ENCODE measurements at regions of chr6 and their contacts with region 1.

Region 1: GRCh38 chr6:121055572-121056163 is 278.6 kb downstream of the TBC1D32 start:
- DNase-seq: peak in 3 of 14 experiments; percentile 34 to 54 (median 47)
- ATAC-seq: peak; percentile 39
- H3K4me3 ChIP-seq: no peak overlapping the region
- H3K4me3 Mint-ChIP-seq: no peak overlapping the region
- H3K27ac ChIP-seq: no peak overlapping the region
- H3K27ac Mint-ChIP-seq: no peak overlapping the region
- H3K4me1 ChIP-seq: no peaks in the 10 kb centered on the region
- H3K4me1 Mint-ChIP-seq: no peaks in the 10 kb centered on the region
- H3K27me3 ChIP-seq: no peaks in the 10 kb centered on the region
- H3K27me3 Mint-ChIP-seq: no peaks in the 10 kb centered on the region
- CTCF ChIP-seq: peak; percentile 65

Region 2: GRCh38 chr6:120918137-120918536 is 137.5 kb before region 1 on chr6:
- CTCF ChIA-PET with region 1: no interaction called
- POLR2A ChIA-PET with region 1: no interaction called
- intact Hi-C with region 1: no loop called
- DNase-seq: no peak
- ATAC-seq: no peak
- H3K4me3 ChIP-seq: no peak overlapping the region
- H3K4me3 Mint-ChIP-seq: no peak overlapping the region
- H3K27ac ChIP-seq: no peak overlapping the region
- H3K27ac Mint-ChIP-seq: no peak overlapping the region
- H3K4me1 ChIP-seq: no peaks in the 10 kb centered on the region
- H3K4me1 Mint-ChIP-seq: no peaks in the 10 kb centered on the region
- H3K27me3 ChIP-seq: no peaks in the 10 kb centered on the region
- H3K27me3 Mint-ChIP-seq: no peaks in the 10 kb centered on the region
- CTCF ChIP-seq: no peak

Region 3: DNA sequence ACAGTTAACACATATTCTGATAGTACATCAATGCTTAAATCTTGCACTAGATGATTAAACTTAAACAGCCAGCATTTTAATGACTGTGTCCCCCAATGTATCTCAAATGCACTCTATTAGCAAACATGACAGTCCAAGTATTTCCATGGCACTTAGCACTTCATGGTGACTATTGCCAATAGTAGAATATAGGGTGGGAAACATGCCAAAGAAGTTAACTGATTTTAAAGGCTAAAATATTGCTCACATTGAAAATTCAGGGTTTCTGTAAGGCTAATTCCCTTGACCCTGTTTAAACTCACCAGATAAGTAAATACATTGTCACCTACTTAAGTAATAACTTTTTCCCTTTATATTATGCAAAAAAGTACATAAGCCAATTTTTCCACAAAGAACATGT is 11.7 kb after region 1 on chr6:
- CTCF ChIA-PET with region 1: no interaction called
- POLR2A ChIA-PET with region 1: no interaction called
- intact Hi-C with region 1: no loop called
- DNase-seq: no peak
- ATAC-seq: no peak
- H3K4me3 ChIP-seq: no peak overlapping the region
- H3K4me3 Mint-ChIP-seq: no peak overlapping the region
- H3K27ac ChIP-seq: no peak overlapping the region
- H3K27ac Mint-ChIP-seq: no peak overlapping the region
- H3K4me1 ChIP-seq: no peaks in the 10 kb centered on the region
- H3K4me1 Mint-ChIP-seq: no peaks in the 10 kb centered on the region
- H3K27me3 ChIP-seq: no peaks in the 10 kb centered on the region
- H3K27me3 Mint-ChIP-seq: no peaks in the 10 kb centered on the region
- CTCF ChIP-seq: no peak

Region 4: DNA sequence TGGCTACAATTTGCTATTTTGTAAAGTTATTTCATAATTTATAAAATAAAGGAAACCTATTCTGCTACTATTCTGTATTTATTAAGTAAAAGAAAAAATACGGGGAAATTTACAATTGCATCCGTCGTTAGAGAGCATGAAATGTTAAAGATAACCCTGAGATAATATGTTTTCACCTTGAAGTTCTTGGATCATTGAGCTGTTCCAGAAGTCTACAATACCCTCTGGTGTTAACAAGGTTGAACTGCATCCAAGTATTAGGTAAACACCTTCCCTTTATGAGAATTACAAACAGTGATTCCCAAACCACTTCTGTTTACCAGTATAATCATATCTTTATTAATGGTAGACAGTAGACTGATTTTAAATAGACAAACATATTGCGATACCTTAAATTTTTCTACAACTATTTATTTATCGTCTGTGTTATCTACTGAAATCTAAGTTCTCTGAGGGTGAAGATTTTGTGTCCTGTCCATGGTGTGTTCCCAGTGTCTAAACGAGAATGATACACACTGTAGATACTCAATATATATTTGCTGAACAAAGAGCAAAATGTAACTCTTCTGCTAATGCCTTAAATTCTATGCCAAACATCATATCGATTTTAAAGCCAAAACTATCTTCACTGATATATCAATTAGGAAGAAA is 250.4 kb after region 1 on chr6:
- CTCF ChIA-PET with region 1: no interaction called
- POLR2A ChIA-PET with region 1: no interaction called
- intact Hi-C with region 1: loop called (anchors 1 to 5 kb)
- DNase-seq: peak in 3 of 14 experiments; percentile 22 to 38 (median 26)
- ATAC-seq: peak; percentile 64
- H3K4me3 ChIP-seq: no peak overlapping the region
- H3K4me3 Mint-ChIP-seq: no peak overlapping the region
- H3K27ac ChIP-seq: no peak overlapping the region
- H3K27ac Mint-ChIP-seq: no peak overlapping the region
- H3K4me1 ChIP-seq: no peaks in the 10 kb centered on the region
- H3K4me1 Mint-ChIP-seq: no peaks in the 10 kb centered on the region
- H3K27me3 ChIP-seq: no peaks in the 10 kb centered on the region
- H3K27me3 Mint-ChIP-seq: no peaks in the 10 kb centered on the region
- CTCF ChIP-seq: peak; percentile 54

Region 5: GRCh38 chr6:121849477-121849876 is 793.8 kb after region 1 on chr6:
- CTCF ChIA-PET with region 1: no interaction called
- POLR2A ChIA-PET with region 1: no interaction called
- intact Hi-C with region 1: loop called in 1 of 2 experiments (anchors 5 kb)
- DNase-seq: peak in 4 of 14 experiments; percentile 6 to 42 (median 32)
- ATAC-seq: no peak
- H3K4me3 ChIP-seq: no peak overlapping the region
- H3K4me3 Mint-ChIP-seq: no peak overlapping the region
- H3K27ac ChIP-seq: no peak overlapping the region
- H3K27ac Mint-ChIP-seq: no peak overlapping the region
- H3K4me1 ChIP-seq: no peaks in the 10 kb centered on the region
- H3K4me1 Mint-ChIP-seq: peaks cover 27% of the 10 kb centered on the region
- H3K27me3 ChIP-seq: no peaks in the 10 kb centered on the region
- H3K27me3 Mint-ChIP-seq: no peaks in the 10 kb centered on the region
- CTCF ChIP-seq: peak; percentile 24

Region 6: DNA sequence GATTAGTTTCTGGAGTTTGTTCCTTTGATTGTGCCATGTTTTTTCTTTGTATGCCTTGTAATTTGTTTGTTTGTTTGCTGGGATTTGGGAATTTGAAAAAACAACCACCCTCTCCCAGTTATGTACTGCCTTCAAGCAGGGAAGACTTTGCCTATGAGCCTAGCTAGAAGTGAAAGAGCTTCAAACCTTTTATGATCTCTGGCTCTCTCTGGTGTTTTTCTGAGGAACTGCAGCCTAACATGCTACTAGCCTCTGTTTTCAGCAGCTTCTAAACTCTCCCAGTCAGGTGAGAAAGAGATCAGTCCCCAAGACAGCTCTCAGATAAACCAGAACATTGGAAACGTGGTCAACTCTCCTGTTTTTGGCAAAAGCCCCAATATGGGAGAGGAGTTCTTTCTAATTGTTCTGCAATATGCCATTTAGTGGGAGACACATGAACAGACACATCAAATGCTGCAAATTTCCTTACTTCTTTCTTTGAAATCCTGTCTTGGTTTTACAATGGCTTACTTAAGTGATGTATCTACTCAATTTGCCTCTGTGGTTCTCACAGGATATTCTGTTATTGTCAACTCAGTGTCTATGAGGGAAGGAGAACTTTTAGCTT is 1474.9 kb after region 1 on chr6:
- CTCF ChIA-PET with region 1: no interaction called
- POLR2A ChIA-PET with region 1: no interaction called
- intact Hi-C with region 1: loop called in 1 of 2 experiments (anchors 1 kb)
- DNase-seq: peak in 13 of 14 experiments; percentile 1 to 77 (median 40)
- ATAC-seq: peak; percentile 94
- H3K4me3 ChIP-seq: no peak overlapping the region
- H3K4me3 Mint-ChIP-seq: no peak overlapping the region
- H3K27ac ChIP-seq: no peak overlapping the region
- H3K27ac Mint-ChIP-seq: no peak overlapping the region
- H3K4me1 ChIP-seq: no peaks in the 10 kb centered on the region
- H3K4me1 Mint-ChIP-seq: no peaks in the 10 kb centered on the region
- H3K27me3 ChIP-seq: peaks cover 2 to 7% of the 10 kb centered on the region in 2 experiments
- H3K27me3 Mint-ChIP-seq: peaks cover 26% of the 10 kb centered on the region
- CTCF ChIP-seq: peak; percentile 97

Measured in CD4-positive, alpha-beta T cell (primary cell).